RWPE1 (cell line): ENCODE measurements at regions of chr4 and their contacts with region 1.

Region 1: DNA sequence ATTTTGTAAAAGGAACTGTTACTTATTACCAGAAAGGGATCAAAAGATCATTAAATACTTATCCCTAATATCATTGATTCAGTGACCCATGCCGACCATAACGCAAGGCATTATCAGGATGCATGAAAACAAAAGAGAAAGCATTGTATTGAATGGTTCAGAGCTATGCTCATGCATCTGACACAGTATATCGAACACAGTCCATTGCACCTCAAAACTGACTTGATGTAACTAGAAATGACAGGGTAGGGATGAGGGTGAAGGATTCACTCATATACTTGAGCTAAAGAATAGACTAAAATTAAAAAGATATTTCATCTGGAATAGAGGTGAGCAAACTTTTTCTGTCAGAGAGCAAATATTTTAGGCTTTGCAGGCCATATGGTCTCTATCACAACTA is 13.1 kb upstream of the SPP1 start:
- DNase-seq: no peak
- H3K27ac ChIP-seq: no peak overlapping the region
- CTCF ChIP-seq: no peak

Region 2: GRCh38 chr4:87973283-87974169 is 11.1 kb after region 1 on chr4:
- CTCF ChIA-PET with region 1: interaction called, 10 read pairs
- POLR2A ChIA-PET with region 1: no interaction called
- DNase-seq: peak; percentile 46
- H3K27ac ChIP-seq: no peak overlapping the region
- CTCF ChIP-seq: peak; percentile 83